Panc1 (cell line): ENCODE measurements at regions of chr5 and their contacts with region 1.

Region 1: DNA sequence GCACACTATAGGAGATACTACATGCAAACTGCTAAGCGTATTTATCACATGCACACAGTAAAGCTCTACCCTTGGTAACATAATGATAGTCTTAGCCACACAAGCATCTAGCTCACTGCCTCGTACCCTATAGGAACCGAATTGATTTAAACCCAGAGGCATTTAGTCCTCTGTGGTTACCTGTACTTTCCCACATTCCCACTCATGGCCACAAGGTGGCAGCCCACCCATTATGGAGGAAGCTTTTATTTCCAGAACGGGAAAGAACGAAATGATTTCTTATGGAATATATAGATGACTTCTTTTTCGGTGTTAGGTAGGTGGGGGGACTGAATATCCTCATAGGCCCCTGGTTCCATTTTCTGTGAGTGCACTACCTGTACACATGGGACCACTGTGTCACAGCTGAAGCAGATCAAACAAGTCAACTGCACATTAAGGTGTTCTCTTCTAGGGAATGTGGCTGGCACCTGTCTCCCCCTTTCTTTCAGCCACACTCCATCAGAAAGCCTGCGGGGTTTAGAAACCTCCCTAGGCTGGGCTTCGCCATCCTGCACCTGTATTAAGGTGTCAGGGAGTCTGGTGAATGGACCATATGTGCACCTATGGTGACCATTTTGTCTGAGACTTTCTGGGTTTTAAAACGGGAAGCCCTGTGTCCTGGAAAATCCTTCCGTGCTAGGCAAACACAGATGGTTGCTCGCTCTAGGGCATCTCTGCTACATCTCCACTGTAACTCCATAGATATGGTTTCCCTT is 313.2 kb downstream of the SLIT3 start:
- DNase-seq: peak; percentile 57
- ATAC-seq: peak; percentile 84
- H3K4me3 ChIP-seq: peak overlapping the region in 1 of 2 experiments; percentile 2; a peak in 1 of 4 replicates
- H3K27ac ChIP-seq: peak overlapping the region; percentile 30; the same call in 1 of the 2 replicates
- H3K4me1 ChIP-seq: peaks cover 5% of the 10 kb centered on the region
- H3K27me3 ChIP-seq: no peaks in the 10 kb centered on the region
- CTCF ChIP-seq: peak; percentile 92

Region 2: GRCh38 chr5:167378894-167379723 is 1608.6 kb before region 1 on chr5:
- CTCF ChIA-PET with region 1: no interaction called
- POLR2A ChIA-PET with region 1: no interaction called
- in situ Hi-C with region 1: no loop called
- intact Hi-C with region 1: no loop called
- DNase-seq: no peak
- ATAC-seq: no peak
- H3K4me3 ChIP-seq: no peak overlapping the region
- H3K27ac ChIP-seq: no peak overlapping the region
- H3K4me1 ChIP-seq: no peaks in the 10 kb centered on the region
- H3K27me3 ChIP-seq: no peaks in the 10 kb centered on the region
- CTCF ChIP-seq: no peak

Region 3: DNA sequence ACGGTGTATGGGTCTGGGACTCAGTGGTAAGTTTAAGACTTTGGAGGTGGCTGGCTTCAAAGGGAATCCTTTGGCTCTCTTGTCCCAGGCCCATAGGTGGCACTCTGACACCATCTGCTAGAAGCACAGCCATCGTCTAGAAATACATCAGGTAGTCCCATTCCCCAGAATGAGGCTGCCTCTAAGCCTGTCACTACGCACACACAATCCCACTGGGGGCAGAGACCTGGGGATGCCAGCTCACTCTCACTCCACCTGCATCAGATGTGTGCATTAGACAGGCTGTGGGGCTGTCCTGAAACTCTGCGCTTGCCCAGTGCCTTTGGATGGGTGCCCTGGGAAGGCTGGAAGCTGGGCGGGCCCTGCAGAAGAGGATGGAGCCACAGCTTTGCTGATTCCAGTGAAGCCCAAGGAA is 281.1 kb before region 1 on chr5:
- CTCF ChIA-PET with region 1: no interaction called
- POLR2A ChIA-PET with region 1: no interaction called
- in situ Hi-C with region 1: no loop called
- intact Hi-C with region 1: loop called (anchors 2 kb)
- DNase-seq: peak; percentile 20
- ATAC-seq: peak; percentile 94
- H3K4me3 ChIP-seq: no peak overlapping the region
- H3K27ac ChIP-seq: no peak overlapping the region
- H3K4me1 ChIP-seq: no peaks in the 10 kb centered on the region
- H3K27me3 ChIP-seq: no peaks in the 10 kb centered on the region
- CTCF ChIP-seq: peak; percentile 86

Region 4: DNA sequence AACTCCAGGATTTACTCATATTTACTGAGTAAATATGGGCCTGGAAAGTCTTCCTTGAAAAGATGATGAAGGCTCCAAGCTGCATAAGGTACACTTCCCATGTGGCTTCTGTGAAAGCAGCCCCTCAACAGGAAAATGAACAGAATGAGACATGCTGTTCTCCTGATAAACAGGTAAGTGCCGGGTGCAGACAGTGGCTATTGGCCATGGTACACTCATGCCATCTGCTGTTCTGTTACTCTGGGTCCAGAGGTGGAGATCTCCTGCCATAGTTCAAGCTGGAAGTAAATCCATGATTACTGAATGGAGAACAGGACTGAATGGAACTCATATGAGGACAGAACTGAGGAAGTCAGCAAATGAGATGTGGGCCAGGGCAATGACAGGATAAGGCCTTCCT is 209.6 kb after region 1 on chr5:
- CTCF ChIA-PET with region 1: no interaction called
- POLR2A ChIA-PET with region 1: no interaction called
- in situ Hi-C with region 1: no loop called
- intact Hi-C with region 1: loop called (anchors 1 kb)
- DNase-seq: no peak
- ATAC-seq: no peak
- H3K4me3 ChIP-seq: no peak overlapping the region
- H3K27ac ChIP-seq: no peak overlapping the region
- H3K4me1 ChIP-seq: no peaks in the 10 kb centered on the region
- H3K27me3 ChIP-seq: no peaks in the 10 kb centered on the region
- CTCF ChIP-seq: peak; percentile 36

Region 5: GRCh38 chr5:169302491-169303118 is 314.9 kb after region 1 on chr5:
- CTCF ChIA-PET with region 1: no interaction called
- POLR2A ChIA-PET with region 1: no interaction called
- in situ Hi-C with region 1: no loop called
- intact Hi-C with region 1: loop called (anchors 1 kb)
- DNase-seq: peak; percentile 69
- ATAC-seq: peak; percentile 44; the same call in 1 of the 2 replicates
- H3K4me3 ChIP-seq: no peak overlapping the region
- H3K27ac ChIP-seq: peak overlapping the region; percentile 64; the same call in 1 of the 2 replicates
- H3K4me1 ChIP-seq: peaks cover 6% of the 10 kb centered on the region
- H3K27me3 ChIP-seq: no peaks in the 10 kb centered on the region
- CTCF ChIP-seq: peak; percentile 92

Region 6: GRCh38 chr5:169548315-169548714 is 560.6 kb after region 1 on chr5:
- CTCF ChIA-PET with region 1: interaction called, 8 read pairs
- POLR2A ChIA-PET with region 1: no interaction called
- in situ Hi-C with region 1: no loop called
- intact Hi-C with region 1: loop called (anchors 2 kb)
- DNase-seq: peak; percentile 33
- ATAC-seq: peak; percentile 95
- H3K4me3 ChIP-seq: no peak overlapping the region
- H3K27ac ChIP-seq: peak overlapping the region; percentile 64; the same call in 1 of the 2 replicates
- H3K4me1 ChIP-seq: no peaks in the 10 kb centered on the region; the same call in 1 of the 2 replicates
- H3K27me3 ChIP-seq: no peaks in the 10 kb centered on the region
- CTCF ChIP-seq: peak; percentile 66; the same call in 1 of the 2 replicates

Region 7: DNA sequence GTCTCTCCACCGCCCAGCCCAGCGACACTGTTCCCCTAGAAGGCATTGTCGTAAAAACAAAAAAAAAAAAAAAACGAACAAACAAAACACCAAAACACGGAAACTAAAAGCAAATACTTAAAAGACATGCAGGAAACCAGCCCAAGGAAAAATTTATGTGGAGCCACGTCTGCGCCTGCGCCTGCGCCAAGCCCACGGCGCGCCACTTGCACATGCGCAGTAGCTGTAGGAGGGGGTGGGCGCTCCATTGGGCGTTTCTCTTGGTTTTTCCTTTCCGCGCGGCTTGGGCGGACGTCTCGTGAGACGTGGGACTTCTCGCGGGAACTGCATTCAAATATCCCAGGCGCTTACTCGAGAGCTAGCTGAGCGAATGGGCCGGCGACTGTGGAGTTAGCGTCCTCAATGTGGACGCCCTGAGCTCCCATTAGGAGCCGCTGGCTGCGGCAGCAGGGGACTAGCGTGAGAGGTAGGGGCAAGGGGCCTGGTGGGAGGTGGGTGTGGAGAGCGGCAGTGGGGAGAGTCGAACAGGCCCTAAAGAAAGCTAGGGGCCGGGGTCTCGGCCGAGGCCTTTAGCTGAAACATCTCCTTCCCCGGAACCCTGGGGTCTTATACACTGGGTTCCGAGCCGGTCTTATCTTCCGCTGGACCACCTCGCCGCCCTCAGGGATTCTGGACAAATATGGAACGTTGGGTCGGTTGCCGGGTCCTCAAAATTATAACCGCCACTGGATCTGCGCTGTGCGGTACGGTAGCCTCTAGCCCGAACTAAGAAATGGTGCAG is 595.9 kb after region 1 on chr5 and contains the start of gene SPDL1:
- CTCF ChIA-PET with region 1: interaction called, 7 read pairs
- POLR2A ChIA-PET with region 1: no interaction called
- in situ Hi-C with region 1: no loop called
- intact Hi-C with region 1: loop called (anchors 1 kb)
- DNase-seq: peak; percentile 90
- ATAC-seq: peak; percentile 93
- H3K4me3 ChIP-seq: peak within 1 kb of the TSS; percentile 86 to 88
- H3K27ac ChIP-seq: peak within 1 kb of the TSS; percentile 97
- H3K4me1 ChIP-seq: peaks cover 38% of the 10 kb centered on the region
- H3K27me3 ChIP-seq: no peaks in the 10 kb centered on the region
- CTCF ChIP-seq: no peak
- total RNA-seq, gene SPDL1: 72.6 TPM